Endothelial cell of umbilical vein (primary cell): ENCODE measurements at regions of chr21 and their contacts with region 1.

Region 1: GRCh38 chr21:33894736-33895288 is 20.8 kb downstream of the ATP5PO start:
- DNase-seq: peak; percentile 92
- H3K4me3 ChIP-seq: peak overlapping the region in 1 of 3 experiments; percentile 3
- H3K27ac ChIP-seq: no peak overlapping the region
- H3K4me1 ChIP-seq: peaks cover 30% of the 10 kb centered on the region
- H3K27me3 ChIP-seq: no peaks in the 10 kb centered on the region
- CTCF ChIP-seq: peak; percentile 75 to 78
- POLR2A ChIP-seq: no peak

Region 2: GRCh38 chr21:33588485-33589335 is 306.1 kb before region 1 on chr21 and contains the start of gene DONSON:
- CTCF ChIA-PET with region 1: interaction called, 8 read pairs
- POLR2A ChIA-PET with region 1: no interaction called
- dilution Hi-C with region 1: no loop called
- intact Hi-C with region 1: loop called (anchors 5 kb)
- DNase-seq: peak; percentile 89
- H3K4me3 ChIP-seq: peak within 1 kb of the TSS; percentile 77 to 95 (median 84)
- H3K27ac ChIP-seq: peak within 1 kb of the TSS; percentile 69
- H3K4me1 ChIP-seq: peaks cover 18% of the 10 kb centered on the region
- H3K27me3 ChIP-seq: no peaks in the 10 kb centered on the region
- CTCF ChIP-seq: peak in 1 of 2 donors; percentile 19
- POLR2A ChIP-seq: peak; percentile 82
- total RNA-seq, gene DONSON: 25.7 and 29.4 TPM in 2 replicates

Region 3: GRCh38 chr21:33836408-33836807 is 58.4 kb before region 1 on chr21:
- CTCF ChIA-PET with region 1: interaction called, 7 read pairs
- POLR2A ChIA-PET with region 1: no interaction called
- dilution Hi-C with region 1: no loop called
- intact Hi-C with region 1: loop called (anchors 5 kb)
- DNase-seq: no peak
- H3K4me3 ChIP-seq: no peak overlapping the region
- H3K27ac ChIP-seq: no peak overlapping the region
- H3K4me1 ChIP-seq: no peaks in the 10 kb centered on the region
- H3K27me3 ChIP-seq: no peaks in the 10 kb centered on the region
- CTCF ChIP-seq: no peak
- POLR2A ChIP-seq: no peak

Region 4: GRCh38 chr21:34215501-34215900 is 320.7 kb after region 1 on chr21:
- CTCF ChIA-PET with region 1: no interaction called
- POLR2A ChIA-PET with region 1: no interaction called
- dilution Hi-C with region 1: no loop called
- intact Hi-C with region 1: no loop called
- DNase-seq: no peak
- H3K4me3 ChIP-seq: no peak overlapping the region
- H3K27ac ChIP-seq: no peak overlapping the region
- H3K4me1 ChIP-seq: no peaks in the 10 kb centered on the region
- H3K27me3 ChIP-seq: peaks cover 8 to 10% of the 10 kb centered on the region in 2 experiments
- CTCF ChIP-seq: no peak
- POLR2A ChIP-seq: no peak